A673 (cell line): ENCODE measurements at regions of chr19 and their contacts with region 1.

Region 1: DNA sequence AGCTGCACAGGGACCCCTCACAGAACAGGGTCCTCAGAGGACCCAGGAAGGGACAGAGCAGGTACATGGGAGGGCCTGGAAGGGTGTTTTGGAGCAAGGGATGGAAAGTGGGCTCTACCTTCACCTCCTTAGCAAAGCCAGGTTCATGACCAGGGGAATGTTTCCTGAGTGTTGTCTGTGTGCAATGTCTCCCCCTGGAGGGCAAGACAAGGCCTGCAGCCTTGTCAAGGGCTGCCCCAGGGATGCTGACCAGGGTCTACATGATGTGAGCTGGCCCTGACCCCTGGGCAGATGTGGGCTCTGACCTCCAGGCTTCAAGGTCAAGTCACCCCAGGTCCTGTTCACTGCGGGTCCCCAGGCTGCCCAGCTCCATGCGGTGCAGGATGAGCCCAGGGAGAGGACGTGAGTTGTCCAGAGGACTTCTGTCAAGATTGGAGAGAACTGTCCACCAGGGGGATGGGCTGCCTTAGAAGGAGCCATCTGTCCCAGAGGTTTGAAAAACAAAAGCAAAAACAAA is 1.0 kb upstream of the CEACAM1 start:
- DNase-seq: peak; percentile 62
- H3K4me3 ChIP-seq: no peak overlapping the region
- H3K27ac ChIP-seq: no peak overlapping the region
- H3K4me1 ChIP-seq: peaks cover 12% of the 10 kb centered on the region
- H3K27me3 ChIP-seq: no peaks in the 10 kb centered on the region
- CTCF ChIP-seq: peak; percentile 96

Region 2: DNA sequence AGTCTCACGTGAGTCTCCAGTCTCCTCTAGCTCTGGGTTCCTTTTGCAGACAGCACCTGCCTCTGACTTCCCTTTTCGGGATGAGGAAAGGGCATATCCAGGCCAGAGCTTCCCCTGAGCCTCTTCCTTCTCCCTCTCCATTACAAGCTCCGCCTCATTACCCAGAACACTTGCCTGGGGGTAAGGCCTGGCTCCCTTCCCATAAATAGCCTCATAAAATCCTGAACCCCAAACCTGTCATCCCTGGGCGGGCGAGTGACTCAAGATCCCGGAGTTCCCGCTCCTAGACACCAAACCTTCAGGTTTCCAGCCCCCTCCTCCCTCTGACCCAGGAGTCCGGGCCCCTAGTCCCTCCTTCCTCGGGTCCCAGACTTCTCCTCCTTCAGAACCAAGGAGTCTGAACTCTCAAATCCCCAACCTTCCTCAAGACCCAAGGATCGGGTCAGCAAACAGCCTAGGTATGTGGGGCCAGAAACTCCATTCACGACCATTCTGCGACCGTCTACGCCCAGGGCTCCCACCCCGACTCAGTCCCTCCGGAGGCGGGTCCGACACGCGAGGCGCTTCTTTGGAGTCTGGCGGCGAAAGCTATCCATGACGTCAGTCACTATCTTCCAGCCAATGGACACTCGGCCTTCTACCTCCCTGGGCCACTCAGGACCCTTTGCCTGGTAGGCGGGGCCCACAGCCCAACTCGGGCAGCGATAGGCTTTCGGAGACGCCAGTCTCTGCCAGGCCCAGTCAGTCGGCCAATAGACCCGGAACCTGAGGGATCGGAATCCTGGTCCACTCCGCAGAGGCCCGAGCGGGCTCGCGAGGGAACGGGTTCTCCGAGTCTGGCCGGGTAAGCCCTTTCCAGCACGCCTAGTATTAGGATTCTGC is 132.7 kb before region 1 on chr19:
- CTCF ChIA-PET with region 1: no interaction called
- POLR2A ChIA-PET with region 1: no interaction called
- intact Hi-C with region 1: no loop called
- DNase-seq: peak; percentile 99
- H3K4me3 ChIP-seq: peak overlapping the region; percentile 56
- H3K27ac ChIP-seq: peak overlapping the region; percentile 81
- H3K4me1 ChIP-seq: peaks cover 10% of the 10 kb centered on the region
- H3K27me3 ChIP-seq: peaks cover 5% of the 10 kb centered on the region
- CTCF ChIP-seq: no peak

Region 3: GRCh38 chr19:42450314-42450934 is 78.9 kb before region 1 on chr19:
- CTCF ChIA-PET with region 1: interaction called, 9 read pairs
- POLR2A ChIA-PET with region 1: no interaction called
- intact Hi-C with region 1: loop called (anchors 1 kb)
- DNase-seq: peak; percentile 77
- H3K4me3 ChIP-seq: no peak overlapping the region
- H3K27ac ChIP-seq: no peak overlapping the region
- H3K4me1 ChIP-seq: no peaks in the 10 kb centered on the region
- H3K27me3 ChIP-seq: no peaks in the 10 kb centered on the region
- CTCF ChIP-seq: peak; percentile 90